Activated T-helper 2 cell treated with anti-CD3 and anti-CD28 coated beads, Interferon-gamma antibody, Interleukin-2, Interleukin-4, amounts not matched to agents 10 μg/mL and 5 μg/mL and 100 μg/mL, durations not matched to agents 14 hours and 24 hours and 36 hours (primary cell): ENCODE measurements at regions of chr3 and their contacts with region 1.

Region 1: GRCh38 chr3:67334588-67334987 is 319.8 kb downstream of the SUCLG2 start:
- DNase-seq: no peak
- H3K4me3 Mint-ChIP-seq: no peak overlapping the region
- H3K27ac Mint-ChIP-seq: no peak overlapping the region
- H3K4me1 Mint-ChIP-seq: peaks cover 24% of the 10 kb centered on the region
- H3K27me3 Mint-ChIP-seq: peaks cover 13% of the 10 kb centered on the region

Region 2: GRCh38 chr3:67349551-67350174 is 15.1 kb after region 1 on chr3:
- intact Hi-C with region 1: loop called (anchors 1 kb)
- DNase-seq: no peak
- H3K4me3 Mint-ChIP-seq: no peak overlapping the region
- H3K27ac Mint-ChIP-seq: peak overlapping the region; percentile 29
- H3K4me1 Mint-ChIP-seq: peaks cover 10% of the 10 kb centered on the region
- H3K27me3 Mint-ChIP-seq: peaks cover 9% of the 10 kb centered on the region